MCF 10A (cell line): ENCODE measurements at regions of chr19 and their contacts with region 1.

Region 1: DNA sequence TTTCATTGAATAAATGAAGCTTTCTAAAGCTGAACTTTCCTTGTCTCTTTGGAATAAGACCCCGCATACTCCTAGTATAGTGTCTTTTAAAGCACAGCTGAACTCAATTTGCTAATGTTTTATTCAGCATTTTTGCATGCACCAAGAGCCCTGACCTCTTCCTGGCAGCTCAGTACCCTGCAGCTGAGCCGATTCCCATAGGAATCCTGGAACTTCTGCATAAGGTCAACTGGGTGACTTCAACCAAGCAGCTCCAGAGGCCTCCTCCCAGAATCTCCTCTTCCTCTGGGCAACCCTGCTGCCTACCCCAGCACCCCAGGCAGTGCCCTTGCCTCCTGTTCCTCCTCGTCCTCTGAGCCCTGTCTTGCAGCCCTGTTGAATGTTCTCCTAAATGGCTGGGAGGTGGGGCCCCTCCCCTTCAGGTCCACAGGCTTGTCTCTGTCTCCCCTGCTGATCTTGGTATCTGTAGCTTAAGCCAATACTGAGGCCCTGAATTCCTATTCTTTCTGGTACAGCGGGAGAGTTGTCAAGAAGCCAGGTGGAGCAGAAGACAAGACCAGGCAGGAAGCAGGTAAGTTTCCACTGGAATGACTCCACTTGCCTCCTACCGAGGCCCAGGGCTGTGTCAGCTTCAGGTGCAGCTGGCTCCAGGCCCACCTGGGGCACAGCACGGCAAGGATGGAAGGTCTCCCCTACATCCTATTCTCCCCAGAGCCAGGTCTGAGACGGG is 23.6 kb upstream of the CCDC124 start:
- DNase-seq: peak; percentile 90
- H3K4me3 Mint-ChIP-seq: no peak overlapping the region
- H3K27ac Mint-ChIP-seq: no peak overlapping the region
- H3K4me1 Mint-ChIP-seq: peaks cover 6% of the 10 kb centered on the region
- H3K27me3 Mint-ChIP-seq: no peaks in the 10 kb centered on the region
- CTCF ChIP-seq: no peak

Region 2: DNA sequence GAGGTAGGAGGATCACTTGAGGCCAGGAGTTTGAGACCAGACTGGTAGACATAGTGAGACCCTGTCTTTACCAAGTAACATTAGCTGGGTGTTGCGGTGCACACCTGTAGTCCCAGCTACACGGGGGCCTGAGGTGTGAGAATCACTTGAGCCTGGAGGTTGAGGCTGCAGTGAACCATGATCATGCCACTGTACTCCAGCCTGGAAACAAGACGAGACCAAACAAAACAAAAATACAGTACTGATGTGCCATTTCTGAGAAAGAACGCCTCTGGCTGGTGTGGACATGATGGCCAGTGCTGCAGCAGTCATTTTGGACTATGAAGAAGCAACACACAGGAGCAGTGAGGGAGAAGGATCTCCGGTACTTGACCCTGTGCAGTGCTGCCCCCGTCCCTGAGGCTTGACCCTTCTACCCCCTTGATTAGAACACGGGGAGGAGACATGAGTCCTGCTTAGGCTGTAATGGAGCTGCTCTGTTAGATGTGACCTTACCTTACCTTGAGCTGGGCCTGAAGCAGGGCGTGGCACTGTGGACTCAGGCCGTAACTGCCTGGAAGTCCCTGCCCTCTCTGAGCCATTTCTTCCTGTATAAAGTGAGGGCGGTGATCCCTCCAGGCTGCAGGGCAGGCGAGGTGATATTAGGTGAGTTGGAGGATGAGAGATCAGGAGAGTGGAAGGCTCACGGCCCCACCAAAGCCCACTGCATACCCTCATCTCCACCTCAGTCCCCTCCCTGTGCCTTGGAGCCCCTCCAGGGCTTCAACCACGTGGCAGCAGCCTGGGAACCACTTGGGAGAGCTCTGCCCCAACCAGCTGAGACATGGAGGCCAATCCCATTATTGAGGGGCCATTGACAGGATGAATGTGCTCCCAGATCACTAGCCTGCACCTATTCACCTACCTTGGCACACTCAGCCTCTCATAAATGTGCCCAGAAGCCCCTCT is 43.5 kb before region 1 on chr19:
- CTCF ChIA-PET with region 1: interaction called, 7 read pairs
- POLR2A ChIA-PET with region 1: interaction called, 11 read pairs
- intact Hi-C with region 1: no loop called
- DNase-seq: peak; percentile 85
- H3K4me3 Mint-ChIP-seq: no peak overlapping the region
- H3K27ac Mint-ChIP-seq: peak overlapping the region; percentile 58
- H3K4me1 Mint-ChIP-seq: peaks cover 18% of the 10 kb centered on the region
- H3K27me3 Mint-ChIP-seq: no peaks in the 10 kb centered on the region
- CTCF ChIP-seq: no peak